Prostate gland (tissue), 2 donors: ENCODE measurements at regions of chr9 and their contacts with region 1.

Region 1: GRCh38 chr9:32968101-32969011 is 33.1 kb downstream of the APTX start:
- DNase-seq: peak; percentile 35
- H3K4me3 ChIP-seq: no peak overlapping the region
- H3K27ac ChIP-seq: no peak overlapping the region
- H3K4me1 ChIP-seq: no peaks in the 10 kb centered on the region
- H3K27me3 ChIP-seq: no peaks in the 10 kb centered on the region
- CTCF ChIP-seq: peak; percentile 67 to 86 (median 74)
- POLR2A ChIP-seq: no peak

Region 2: GRCh38 chr9:32378993-32379729 is 589.2 kb before region 1 on chr9:
- intact Hi-C with region 1: loop called (anchors 5 kb)
- DNase-seq: peak; percentile 37
- H3K4me3 ChIP-seq: no peak overlapping the region
- H3K27ac ChIP-seq: no peak overlapping the region
- H3K4me1 ChIP-seq: no peaks in the 10 kb centered on the region
- H3K27me3 ChIP-seq: no peaks in the 10 kb centered on the region
- CTCF ChIP-seq: peak; percentile 53 to 85 (median 72)
- POLR2A ChIP-seq: no peak

Region 3: GRCh38 chr9:32431940-32432555 is 536.3 kb before region 1 on chr9:
- intact Hi-C with region 1: loop called (anchors 5 kb)
- DNase-seq: peak; percentile 40
- H3K4me3 ChIP-seq: no peak overlapping the region
- H3K27ac ChIP-seq: no peak overlapping the region
- H3K4me1 ChIP-seq: no peaks in the 10 kb centered on the region
- H3K27me3 ChIP-seq: no peaks in the 10 kb centered on the region
- CTCF ChIP-seq: peak in 3 of 4 experiments; percentile 46 to 50 (median 48)
- POLR2A ChIP-seq: no peak

Region 4: DNA sequence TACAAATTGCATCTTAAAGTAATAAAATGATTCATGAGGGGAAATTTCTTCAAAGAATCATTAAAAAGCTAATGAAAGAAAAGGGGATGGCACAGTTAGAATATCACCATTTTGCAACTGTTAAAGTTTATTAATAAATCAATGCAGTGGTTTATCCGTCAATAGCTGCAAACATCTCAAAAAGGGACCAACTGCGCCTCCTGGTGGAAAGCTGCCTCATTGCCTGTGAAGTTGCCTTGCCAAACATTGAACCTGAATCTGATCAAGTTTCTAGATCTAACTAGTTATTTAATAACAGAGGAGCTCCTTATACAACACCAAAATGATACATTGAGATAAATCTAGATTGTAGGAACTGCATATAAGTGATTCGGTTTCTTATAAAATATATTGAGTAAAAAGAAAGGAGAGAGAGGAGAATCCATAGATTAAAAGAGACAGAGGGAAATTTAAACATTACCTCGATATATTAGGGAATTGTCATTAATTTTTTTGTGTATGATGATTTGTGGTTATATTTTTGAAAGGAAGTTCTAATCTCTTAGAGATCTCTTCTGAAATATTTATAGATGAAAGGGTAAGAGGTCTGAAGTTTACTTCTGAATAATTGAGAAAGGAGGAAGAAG is 388.5 kb before region 1 on chr9:
- intact Hi-C with region 1: loop called (anchors 5 kb)
- DNase-seq: peak; percentile 48
- H3K4me3 ChIP-seq: no peak overlapping the region
- H3K27ac ChIP-seq: no peak overlapping the region
- H3K4me1 ChIP-seq: no peaks in the 10 kb centered on the region
- H3K27me3 ChIP-seq: no peaks in the 10 kb centered on the region
- CTCF ChIP-seq: peak; percentile 50 to 86 (median 81)
- POLR2A ChIP-seq: no peak

Region 5: GRCh38 chr9:32703635-32704034 is 264.7 kb before region 1 on chr9:
- intact Hi-C with region 1: no loop called
- DNase-seq: no peak
- H3K4me3 ChIP-seq: no peak overlapping the region
- H3K27ac ChIP-seq: no peak overlapping the region
- H3K4me1 ChIP-seq: no peaks in the 10 kb centered on the region
- H3K27me3 ChIP-seq: no peaks in the 10 kb centered on the region
- CTCF ChIP-seq: no peak
- POLR2A ChIP-seq: no peak

Region 6: DNA sequence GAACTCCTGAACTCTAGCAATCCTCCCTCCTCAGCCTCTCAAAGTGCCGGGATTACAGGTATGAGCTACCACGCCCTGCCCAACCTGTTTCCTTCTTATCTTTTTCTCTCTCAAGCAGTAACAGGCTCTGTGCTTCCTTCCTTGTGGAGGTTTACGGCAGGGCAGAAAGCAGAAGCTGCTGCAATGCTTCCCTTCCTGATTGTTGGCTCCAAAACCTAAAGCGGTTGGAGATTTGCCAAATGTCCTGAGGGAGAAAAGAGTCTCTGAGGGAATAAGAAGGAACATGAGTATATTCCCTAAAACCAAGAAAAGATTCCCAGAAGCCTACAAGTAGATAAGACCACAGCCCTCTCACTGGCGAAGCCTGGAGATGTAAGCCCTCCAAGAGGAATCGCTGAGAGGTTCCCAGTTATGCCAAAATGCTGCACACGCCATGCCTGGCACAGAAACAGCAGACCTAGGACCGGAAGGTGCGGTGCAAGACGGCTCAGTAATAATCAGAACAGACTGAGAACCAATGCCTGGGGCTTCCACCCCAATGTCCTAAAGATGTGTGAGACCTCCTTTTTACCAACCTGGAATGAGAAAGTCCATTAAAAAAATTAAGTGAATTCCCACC is 40.1 kb before region 1 on chr9:
- intact Hi-C with region 1: no loop called
- DNase-seq: no peak
- H3K4me3 ChIP-seq: no peak overlapping the region
- H3K27ac ChIP-seq: no peak overlapping the region
- H3K4me1 ChIP-seq: no peaks in the 10 kb centered on the region
- H3K27me3 ChIP-seq: no peaks in the 10 kb centered on the region
- CTCF ChIP-seq: no peak
- POLR2A ChIP-seq: no peak